Prostate gland (tissue), 2 donors: ENCODE measurements at regions of chr5 and their contacts with region 1.

Region 1: GRCh38 chr5:1004461-1005248 is 3.9 kb upstream of the NKD2 start:
- DNase-seq: peak; percentile 56
- H3K4me3 ChIP-seq: peak overlapping the region; percentile 42 to 45
- H3K27ac ChIP-seq: peak overlapping the region; percentile 17 to 39
- H3K4me1 ChIP-seq: peaks cover 7% of the 10 kb centered on the region
- H3K27me3 ChIP-seq: no peaks in the 10 kb centered on the region
- CTCF ChIP-seq: peak in 2 of 4 experiments; percentile 34 to 41
- POLR2A ChIP-seq: no peak

Region 2: DNA sequence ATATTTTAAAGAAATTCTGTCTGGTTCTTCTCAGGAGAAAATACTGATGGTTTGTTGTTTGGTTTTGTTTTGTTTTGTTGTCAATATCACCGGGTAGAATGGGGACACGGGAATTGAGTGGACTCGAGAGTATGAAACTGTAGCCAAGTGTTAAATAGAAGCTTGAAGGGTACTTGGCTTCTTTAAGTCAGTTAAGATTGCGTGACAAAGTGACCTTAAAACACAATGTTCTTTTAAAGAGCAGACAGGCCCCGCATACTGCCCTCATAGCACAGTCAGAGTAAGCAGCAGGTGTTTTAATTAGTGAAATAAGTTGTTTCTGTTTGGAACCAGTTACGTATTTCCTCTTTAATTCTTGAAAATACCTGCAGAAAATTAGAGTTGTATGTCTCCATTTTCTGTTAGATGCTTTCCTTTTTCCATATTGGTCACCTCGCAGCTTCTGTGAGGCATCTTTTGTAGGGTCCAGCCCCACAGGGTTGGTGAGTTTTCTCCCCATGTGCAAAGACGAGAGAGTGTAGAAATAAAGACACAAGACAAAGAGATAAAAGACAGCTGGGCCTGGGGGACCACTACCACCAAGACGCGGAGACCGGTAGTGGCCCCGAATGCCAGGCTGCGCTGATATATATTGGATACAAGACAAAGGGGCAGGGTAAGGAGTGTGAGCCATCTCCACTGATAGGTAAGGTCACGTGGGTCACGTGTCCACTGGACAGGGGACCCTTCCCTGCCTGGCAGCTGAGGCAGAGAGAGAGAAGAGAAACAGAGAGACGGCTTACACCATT is 102.3 kb before region 1 on chr5:
- intact Hi-C with region 1: no loop called
- DNase-seq: no peak
- H3K4me3 ChIP-seq: no peak overlapping the region
- H3K27ac ChIP-seq: no peak overlapping the region
- H3K4me1 ChIP-seq: no peaks in the 10 kb centered on the region
- H3K27me3 ChIP-seq: no peaks in the 10 kb centered on the region
- CTCF ChIP-seq: no peak
- POLR2A ChIP-seq: no peak

Region 3: DNA sequence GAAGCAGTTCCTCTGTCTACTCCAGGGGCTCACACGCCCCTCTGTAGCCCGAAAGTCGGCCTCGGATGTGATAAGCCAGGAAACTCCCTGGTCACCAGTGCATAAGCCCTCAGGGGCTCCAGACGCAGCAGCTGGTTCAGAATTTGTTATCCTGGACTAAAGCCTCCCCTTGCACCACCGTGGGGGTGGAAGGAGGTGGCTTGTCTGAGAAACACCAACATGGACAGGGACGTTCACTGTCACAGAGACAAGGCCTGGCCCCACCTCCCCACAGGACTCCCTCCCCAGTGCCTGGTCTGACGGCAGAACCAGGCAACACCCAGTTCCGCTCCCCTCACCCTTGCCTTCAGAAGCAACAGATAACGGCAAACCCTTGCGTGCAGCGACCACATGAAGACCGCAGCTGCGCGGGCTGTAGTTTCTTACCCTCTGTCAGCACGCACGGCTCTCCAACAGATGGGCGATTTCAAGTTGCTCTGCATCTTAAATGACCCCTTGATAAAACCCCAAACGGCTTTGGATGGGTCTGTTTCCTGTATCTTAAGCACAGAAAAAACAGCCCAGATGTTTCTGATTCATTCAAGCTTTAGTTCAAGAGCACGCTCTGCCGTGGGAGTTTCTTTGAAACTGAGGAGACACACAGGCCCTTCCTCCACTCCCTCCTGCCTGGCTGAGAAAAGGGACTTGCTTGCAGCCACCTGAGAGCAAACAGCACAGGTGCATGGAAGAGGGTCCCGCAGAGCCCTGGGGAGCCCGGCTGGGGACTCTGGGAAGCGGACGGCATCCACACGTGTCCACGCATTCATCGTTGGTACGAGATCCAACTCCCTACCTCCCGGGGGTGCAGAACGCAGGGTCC is 40.8 kb before region 1 on chr5:
- intact Hi-C with region 1: loop called (anchors 2 kb)
- DNase-seq: no peak
- H3K4me3 ChIP-seq: no peak overlapping the region
- H3K27ac ChIP-seq: no peak overlapping the region
- H3K4me1 ChIP-seq: no peaks in the 10 kb centered on the region
- H3K27me3 ChIP-seq: no peaks in the 10 kb centered on the region
- CTCF ChIP-seq: no peak
- POLR2A ChIP-seq: no peak

Region 4: DNA sequence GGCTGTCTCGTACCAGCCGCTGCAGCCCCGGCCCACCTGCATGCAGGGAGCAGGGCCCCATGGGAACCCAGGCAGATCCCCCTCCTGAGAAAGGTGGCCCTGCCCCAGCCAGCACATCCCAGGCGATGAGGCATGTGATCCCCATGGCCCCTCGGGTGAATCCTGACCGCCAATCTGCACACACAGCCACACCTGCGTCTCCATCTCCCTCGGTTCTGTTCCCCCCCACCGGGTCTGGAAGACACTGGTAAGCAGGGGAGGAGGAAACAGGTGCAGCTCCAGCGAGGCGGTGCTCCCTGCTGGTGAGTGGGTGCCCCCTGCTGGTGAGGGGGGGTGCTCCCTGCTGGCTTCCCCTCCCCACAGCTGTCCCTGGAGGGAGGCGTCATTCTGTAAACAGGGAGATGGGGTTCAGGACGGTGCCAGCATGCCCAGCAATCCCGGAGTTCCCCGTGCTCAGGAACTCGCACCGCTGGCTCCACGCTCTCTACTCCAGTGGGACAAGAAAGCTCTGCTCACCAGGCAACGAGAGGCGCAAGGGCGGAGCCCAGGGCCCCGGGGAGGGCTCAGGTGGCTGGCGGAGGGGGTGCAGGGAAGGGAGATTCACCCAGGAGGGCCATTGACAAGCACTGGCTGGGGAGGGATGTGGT is 135.6 kb after region 1 on chr5:
- intact Hi-C with region 1: loop called (anchors 5 kb)
- DNase-seq: peak; percentile 81
- H3K4me3 ChIP-seq: no peak overlapping the region
- H3K27ac ChIP-seq: no peak overlapping the region
- H3K4me1 ChIP-seq: peaks cover 3% of the 10 kb centered on the region
- H3K27me3 ChIP-seq: no peaks in the 10 kb centered on the region
- CTCF ChIP-seq: peak; percentile 73 to 96 (median 91)
- POLR2A ChIP-seq: no peak

Region 5: DNA sequence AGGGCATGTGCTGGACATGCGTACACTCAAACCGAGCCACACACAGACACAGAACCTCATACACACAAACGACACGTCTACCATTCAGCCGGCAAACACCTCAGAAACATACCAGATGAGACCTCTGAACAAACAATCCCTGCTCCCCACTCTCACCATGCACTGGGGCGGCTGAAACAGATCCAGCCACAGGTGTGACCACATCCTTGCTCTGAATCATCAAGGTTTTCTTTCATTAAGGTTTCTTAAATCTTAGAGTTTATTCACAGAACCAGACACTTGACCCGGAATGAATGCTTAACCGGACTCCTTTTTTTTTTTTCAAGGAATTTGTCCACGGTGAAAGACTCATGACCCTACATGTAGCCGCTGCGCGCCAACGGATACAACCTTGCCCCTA is 264.0 kb after region 1 on chr5:
- intact Hi-C with region 1: no loop called
- DNase-seq: no peak
- H3K4me3 ChIP-seq: no peak overlapping the region
- H3K27ac ChIP-seq: no peak overlapping the region
- H3K4me1 ChIP-seq: no peaks in the 10 kb centered on the region
- H3K27me3 ChIP-seq: no peaks in the 10 kb centered on the region
- CTCF ChIP-seq: no peak
- POLR2A ChIP-seq: no peak